B cell (primary cell): ENCODE measurements at regions of chr11 and their contacts with region 1.

Region 1: GRCh38 chr11:842370-843002 is at the starts of genes POLR2L and TSPAN4:
- DNase-seq: peak; percentile 97
- ATAC-seq: peak; percentile 84
- H3K4me3 ChIP-seq: peak within 1 kb of the TSS; percentile 69 to 96 (median 76)
- H3K4me3 Mint-ChIP-seq: peak within 1 kb of the TSS; percentile 88
- H3K27ac ChIP-seq: peak within 1 kb of the TSS in 1 of 2 donors; percentile 93
- H3K27ac Mint-ChIP-seq: peak within 1 kb of the TSS; percentile 91
- H3K4me1 ChIP-seq: peaks cover 26 to 37% of the 10 kb centered on the region in 2 donors
- H3K4me1 Mint-ChIP-seq: peaks cover 27% of the 10 kb centered on the region
- H3K27me3 ChIP-seq: peaks cover 0 to 30% (median 6%) of the 10 kb centered on the region in 4 experiments
- H3K27me3 Mint-ChIP-seq: no peaks in the 10 kb centered on the region
- CTCF ChIP-seq: no peak
- total RNA-seq, gene POLR2L: 39.0 and 44.4 TPM in 2 replicates
- total RNA-seq, gene TSPAN4: 2.2 and 2.9 TPM in 2 replicates

Region 2: GRCh38 chr11:809287-810039 is 33.0 kb before region 1 on chr11 and contains the start of gene RPLP2:
- CTCF ChIA-PET with region 1: no interaction called
- POLR2A ChIA-PET with region 1: interaction called, 13 read pairs
- intact Hi-C with region 1: loop called (anchors 1 kb)
- DNase-seq: peak; percentile 100
- ATAC-seq: peak; percentile 82
- H3K4me3 ChIP-seq: peak within 1 kb of the TSS; percentile 53 to 95 (median 86)
- H3K4me3 Mint-ChIP-seq: peak within 1 kb of the TSS; percentile 96
- H3K27ac ChIP-seq: peak within 1 kb of the TSS; percentile 83 to 94
- H3K27ac Mint-ChIP-seq: peak within 1 kb of the TSS; percentile 99
- H3K4me1 ChIP-seq: peaks cover 23 to 35% of the 10 kb centered on the region in 2 donors
- H3K4me1 Mint-ChIP-seq: peaks cover 42% of the 10 kb centered on the region
- H3K27me3 ChIP-seq: no peaks in the 10 kb centered on the region
- H3K27me3 Mint-ChIP-seq: no peaks in the 10 kb centered on the region
- CTCF ChIP-seq: no peak
- total RNA-seq, gene RPLP2: 3,814 and 3,947 TPM in 2 replicates

Region 3: GRCh38 chr11:819129-819931 is 23.2 kb before region 1 on chr11:
- CTCF ChIA-PET with region 1: interaction called, 3 read pairs
- POLR2A ChIA-PET with region 1: interaction called, 29 read pairs
- intact Hi-C with region 1: loop called (anchors 1 kb)
- DNase-seq: peak; percentile 96
- ATAC-seq: peak; percentile 81
- H3K4me3 ChIP-seq: peak overlapping the region in 4 of 5 experiments; percentile 58 to 82 (median 77)
- H3K4me3 Mint-ChIP-seq: peak overlapping the region; percentile 92
- H3K27ac ChIP-seq: peak overlapping the region; percentile 68 to 91
- H3K27ac Mint-ChIP-seq: peak overlapping the region; percentile 91
- H3K4me1 ChIP-seq: peaks cover 16 to 26% of the 10 kb centered on the region in 2 donors
- H3K4me1 Mint-ChIP-seq: peaks cover 20% of the 10 kb centered on the region
- H3K27me3 ChIP-seq: no peaks in the 10 kb centered on the region
- H3K27me3 Mint-ChIP-seq: no peaks in the 10 kb centered on the region
- CTCF ChIP-seq: peak; percentile 30

Region 4: DNA sequence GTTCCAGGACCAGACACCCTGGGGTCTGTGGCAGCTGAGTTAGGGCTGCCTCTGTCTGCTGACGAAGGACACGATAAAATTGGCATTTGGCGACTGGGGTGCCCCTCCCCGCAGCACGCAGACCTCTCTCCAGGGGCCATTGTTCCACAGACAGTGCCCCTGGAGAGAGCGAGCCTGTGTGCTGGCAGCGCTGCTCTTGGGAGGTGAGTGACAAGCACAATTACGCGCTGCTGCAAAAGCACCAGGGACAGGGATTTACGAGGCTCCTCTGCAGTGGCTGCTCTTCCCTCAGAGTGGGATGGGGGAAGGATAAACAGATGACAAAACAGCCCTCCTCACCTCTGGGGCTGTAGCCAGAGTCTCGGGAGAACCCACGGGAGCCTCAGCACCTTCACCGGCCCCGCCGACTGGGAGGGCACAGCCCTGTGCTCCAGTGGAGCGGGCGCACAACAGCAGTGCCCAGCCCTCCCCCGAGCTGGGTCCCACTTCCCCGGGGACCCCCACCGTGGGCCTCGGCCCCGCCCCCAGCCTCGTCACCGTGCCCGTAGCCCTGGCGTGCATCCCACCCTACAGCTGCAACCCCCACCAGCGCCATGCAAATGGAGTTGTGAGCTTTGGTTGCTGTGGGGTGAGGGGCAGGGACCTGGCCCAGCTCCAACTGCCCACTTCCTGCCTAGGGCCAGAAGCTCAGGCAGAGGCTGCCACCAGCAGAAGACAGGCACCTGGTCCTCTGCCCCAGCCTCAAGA is 48.5 kb after region 1 on chr11:
- CTCF ChIA-PET with region 1: no interaction called
- POLR2A ChIA-PET with region 1: no interaction called
- intact Hi-C with region 1: no loop called
- DNase-seq: no peak
- ATAC-seq: no peak
- H3K4me3 ChIP-seq: no peak overlapping the region
- H3K4me3 Mint-ChIP-seq: no peak overlapping the region
- H3K27ac ChIP-seq: no peak overlapping the region
- H3K27ac Mint-ChIP-seq: no peak overlapping the region
- H3K4me1 ChIP-seq: no peaks in the 10 kb centered on the region
- H3K4me1 Mint-ChIP-seq: no peaks in the 10 kb centered on the region
- H3K27me3 ChIP-seq: no peaks in the 10 kb centered on the region
- H3K27me3 Mint-ChIP-seq: no peaks in the 10 kb centered on the region
- CTCF ChIP-seq: no peak

Region 5: GRCh38 chr11:910589-911195 is 68.2 kb after region 1 on chr11 and contains the start of gene CHID1:
- CTCF ChIA-PET with region 1: no interaction called
- POLR2A ChIA-PET with region 1: no interaction called
- intact Hi-C with region 1: loop called (anchors 2 kb)
- DNase-seq: peak; percentile 87
- ATAC-seq: peak; percentile 96
- H3K4me3 ChIP-seq: peak within 1 kb of the TSS in 4 of 5 experiments; percentile 59 to 83 (median 79)
- H3K4me3 Mint-ChIP-seq: peak within 1 kb of the TSS; percentile 92
- H3K27ac ChIP-seq: peak within 1 kb of the TSS in 1 of 2 donors; percentile 74
- H3K27ac Mint-ChIP-seq: peak within 1 kb of the TSS; percentile 91
- H3K4me1 ChIP-seq: peaks cover 3 to 23% of the 10 kb centered on the region in 2 donors
- H3K4me1 Mint-ChIP-seq: peaks cover 25% of the 10 kb centered on the region
- H3K27me3 ChIP-seq: no peaks in the 10 kb centered on the region
- H3K27me3 Mint-ChIP-seq: no peaks in the 10 kb centered on the region
- CTCF ChIP-seq: no peak
- total RNA-seq, gene CHID1: 62.5 and 68.1 TPM in 2 replicates